IMR-90 (cell line): ENCODE measurements at regions of chr21 and their contacts with region 1.

Region 1: DNA sequence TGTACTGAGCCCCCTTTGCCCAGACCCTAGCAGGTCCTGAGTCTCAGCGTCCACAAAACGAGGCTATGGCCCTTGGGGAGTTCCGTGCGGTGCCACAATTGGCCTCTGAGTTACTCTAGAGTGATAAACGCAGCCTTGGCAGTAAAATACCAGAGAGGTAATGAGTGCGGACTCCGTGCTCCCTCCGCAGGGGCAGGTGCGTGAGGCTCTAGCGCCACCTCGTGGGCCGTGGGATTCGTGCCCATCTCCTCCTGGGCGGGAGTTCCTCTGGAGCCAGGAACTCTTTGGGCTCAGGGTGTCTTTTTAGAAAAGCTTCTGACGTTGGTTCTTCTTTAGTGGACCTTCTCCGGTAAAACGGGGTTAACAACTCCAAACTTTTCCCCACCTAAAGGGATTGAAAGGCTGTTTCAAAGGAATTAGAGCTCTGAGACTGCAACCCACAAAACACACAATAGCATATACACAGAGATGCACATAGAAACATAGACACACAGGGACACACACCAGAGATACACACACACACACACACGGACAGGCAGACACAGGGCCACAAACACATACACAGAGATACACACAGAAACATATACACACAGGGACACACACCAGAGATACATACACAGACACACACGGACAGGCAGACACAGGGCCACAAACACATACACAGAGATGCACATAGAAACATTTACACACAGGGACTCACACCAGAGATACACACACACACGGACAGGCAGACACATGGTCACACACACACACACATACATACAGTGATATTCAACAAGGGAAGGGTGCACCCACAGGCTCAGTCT is 99.4 kb downstream of the KCNJ15 start:
- DNase-seq: peak; percentile 61
- ATAC-seq: peak; percentile 79
- H3K4me3 ChIP-seq: no peak overlapping the region
- H3K27ac ChIP-seq: no peak overlapping the region
- H3K4me1 ChIP-seq: peaks cover 11% of the 10 kb centered on the region
- H3K27me3 ChIP-seq: peaks cover 16% of the 10 kb centered on the region
- CTCF ChIP-seq: peak; percentile 99
- POLR2A ChIP-seq: peak; percentile 55; the same call in 1 of the 2 replicates
- RAD21 ChIP-seq: peak; percentile 100

Region 2: DNA sequence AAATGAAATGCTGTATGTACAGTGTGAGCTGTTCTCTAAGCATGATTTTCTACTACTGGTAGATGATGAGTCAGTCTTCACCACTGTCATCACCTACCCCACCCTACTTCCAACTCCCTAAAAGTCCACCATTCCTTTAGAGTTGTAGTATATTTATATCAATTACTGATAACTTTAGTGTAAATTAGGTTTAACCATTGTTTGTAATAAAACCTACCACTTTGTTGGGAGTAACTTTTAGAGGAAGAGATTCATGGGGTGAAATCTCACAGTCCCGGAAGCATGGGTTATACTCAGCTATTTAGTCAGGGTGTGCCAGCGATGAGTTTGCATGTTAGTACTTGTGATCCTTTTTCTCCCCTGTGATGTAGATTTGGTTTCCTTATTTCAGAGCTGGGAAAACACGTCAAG is 2019.1 kb before region 1 on chr21:
- CTCF ChIA-PET with region 1: no interaction called
- POLR2A ChIA-PET with region 1: no interaction called
- dilution Hi-C with region 1: no loop called
- in situ Hi-C with region 1: no loop called
- intact Hi-C with region 1: no loop called
- DNase-seq: peak; percentile 78
- ATAC-seq: peak; percentile 96
- H3K4me3 ChIP-seq: no peak overlapping the region
- H3K27ac ChIP-seq: no peak overlapping the region
- H3K4me1 ChIP-seq: peaks cover 4% of the 10 kb centered on the region
- H3K27me3 ChIP-seq: no peaks in the 10 kb centered on the region
- CTCF ChIP-seq: no peak
- POLR2A ChIP-seq: no peak
- RAD21 ChIP-seq: no peak

Region 3: DNA sequence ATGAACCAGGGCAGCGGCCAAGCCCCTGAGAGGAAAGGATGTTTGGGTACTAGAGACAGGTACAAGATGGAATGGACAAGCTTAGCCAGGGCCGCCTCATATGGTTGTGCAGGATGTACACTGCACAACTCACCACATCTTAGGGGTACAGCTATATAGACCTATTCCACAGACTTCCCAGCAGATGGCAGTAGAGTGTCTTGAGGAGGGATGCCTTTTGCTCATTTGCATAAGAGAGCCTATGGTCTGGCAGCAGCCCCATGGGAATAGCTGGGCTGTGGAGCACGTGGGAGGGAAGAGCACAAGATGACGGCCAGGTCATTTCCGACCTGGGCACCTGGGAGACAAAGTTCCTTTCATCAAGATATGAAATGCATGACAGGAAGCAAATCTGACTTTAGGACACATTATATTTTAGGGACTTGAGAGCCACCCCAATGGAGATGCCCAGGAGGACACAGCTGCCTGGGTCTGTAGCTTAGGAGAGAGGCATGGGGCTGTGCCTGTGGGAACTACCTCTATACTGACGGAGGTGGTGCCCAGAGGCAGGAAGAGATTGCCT is 655.5 kb before region 1 on chr21:
- CTCF ChIA-PET with region 1: interaction called, 4 read pairs
- POLR2A ChIA-PET with region 1: no interaction called
- dilution Hi-C with region 1: no loop called
- in situ Hi-C with region 1: no loop called
- intact Hi-C with region 1: loop called (anchors 1 kb)
- DNase-seq: peak; percentile 84
- ATAC-seq: peak; percentile 100
- H3K4me3 ChIP-seq: no peak overlapping the region
- H3K27ac ChIP-seq: no peak overlapping the region
- H3K4me1 ChIP-seq: no peaks in the 10 kb centered on the region
- H3K27me3 ChIP-seq: peaks cover 22% of the 10 kb centered on the region
- CTCF ChIP-seq: peak; percentile 78
- POLR2A ChIP-seq: no peak
- RAD21 ChIP-seq: peak; percentile 78

Region 4: GRCh38 chr21:37896788-37897187 is 459.4 kb before region 1 on chr21:
- CTCF ChIA-PET with region 1: no interaction called
- POLR2A ChIA-PET with region 1: no interaction called
- dilution Hi-C with region 1: no loop called
- in situ Hi-C with region 1: no loop called
- intact Hi-C with region 1: no loop called
- DNase-seq: no peak
- ATAC-seq: no peak
- H3K4me3 ChIP-seq: no peak overlapping the region
- H3K27ac ChIP-seq: no peak overlapping the region
- H3K4me1 ChIP-seq: no peaks in the 10 kb centered on the region
- H3K27me3 ChIP-seq: peaks cover 50% of the 10 kb centered on the region
- CTCF ChIP-seq: no peak
- POLR2A ChIP-seq: no peak
- RAD21 ChIP-seq: no peak

Region 5: DNA sequence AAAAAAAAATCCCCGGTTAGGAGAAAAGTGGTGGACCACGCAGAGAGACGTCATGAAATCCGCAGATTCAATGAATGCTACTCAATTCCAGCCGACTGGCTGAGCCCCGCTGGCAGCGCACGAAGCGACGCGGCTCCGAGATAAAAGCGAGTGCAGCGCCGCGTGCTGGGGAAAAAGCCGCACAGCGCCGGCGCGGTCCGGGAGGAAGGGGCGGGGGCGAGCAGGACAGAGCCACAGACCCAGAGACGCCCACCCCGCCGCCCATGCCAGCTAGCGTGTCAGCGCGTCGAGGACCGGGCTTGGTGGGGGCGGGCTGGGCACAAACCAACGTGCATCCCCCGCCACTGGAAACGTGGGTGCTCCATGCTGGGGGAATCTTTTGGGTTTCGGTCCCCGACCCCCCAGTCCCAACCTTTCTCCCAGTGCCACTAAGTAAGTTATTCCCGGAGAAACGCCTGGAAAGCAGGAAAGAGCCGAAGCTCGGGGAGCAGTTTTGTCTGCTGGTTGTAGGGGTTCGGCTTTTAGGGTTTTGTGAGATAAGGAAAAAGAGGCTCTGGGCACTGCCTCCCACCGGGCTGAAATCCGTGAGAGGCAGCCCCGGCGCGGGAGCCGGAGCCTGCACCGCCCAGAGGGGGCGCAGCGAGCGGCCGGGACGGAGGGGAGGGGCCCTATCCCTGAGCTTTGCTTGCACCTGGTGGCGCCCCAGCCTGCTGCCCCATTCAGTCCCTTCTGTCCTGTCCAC is 439.7 kb before region 1 on chr21 and contains the start of gene KCNJ6:
- CTCF ChIA-PET with region 1: no interaction called
- POLR2A ChIA-PET with region 1: no interaction called
- dilution Hi-C with region 1: no loop called
- in situ Hi-C with region 1: no loop called
- intact Hi-C with region 1: loop called (anchors 1 kb)
- DNase-seq: peak; percentile 52
- ATAC-seq: peak; percentile 89
- H3K4me3 ChIP-seq: peak within 1 kb of the TSS; percentile 14
- H3K27ac ChIP-seq: no peak within 1 kb of the TSS; the same call in 1 of the 2 replicates
- H3K4me1 ChIP-seq: peaks cover 6% of the 10 kb centered on the region
- H3K27me3 ChIP-seq: peaks cover 37% of the 10 kb centered on the region
- CTCF ChIP-seq: peak; percentile 91
- POLR2A ChIP-seq: no peak
- RAD21 ChIP-seq: peak; percentile 90
- total RNA-seq, gene KCNJ6: under 0.01 TPM in 2 replicates

Region 6: DNA sequence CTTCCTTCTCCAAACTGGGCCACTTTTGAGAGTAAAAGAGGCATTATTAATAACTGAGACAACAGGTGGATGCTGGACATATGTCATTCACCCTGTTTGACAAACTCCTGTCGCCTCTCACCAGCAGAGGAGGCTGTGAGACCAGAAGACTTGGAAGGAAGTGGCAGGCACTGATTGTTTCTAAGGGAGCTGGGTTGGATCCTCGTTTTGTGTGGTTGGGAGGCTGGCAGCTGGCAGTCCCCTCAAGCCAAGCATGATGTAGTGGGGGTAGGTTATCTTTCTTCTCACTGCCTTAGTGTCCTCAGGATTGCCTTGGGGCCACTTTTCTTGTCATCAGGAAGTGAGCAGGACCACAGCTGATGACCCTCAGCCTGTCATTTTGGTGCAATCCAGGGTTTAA is 185.9 kb before region 1 on chr21:
- CTCF ChIA-PET with region 1: interaction called, 48 read pairs
- POLR2A ChIA-PET with region 1: no interaction called
- dilution Hi-C with region 1: no loop called
- in situ Hi-C with region 1: no loop called
- intact Hi-C with region 1: loop called (anchors 1 kb)
- DNase-seq: peak; percentile 12
- ATAC-seq: no peak
- H3K4me3 ChIP-seq: no peak overlapping the region
- H3K27ac ChIP-seq: no peak overlapping the region; the same call in 1 of the 2 replicates
- H3K4me1 ChIP-seq: peaks cover 15% of the 10 kb centered on the region
- H3K27me3 ChIP-seq: peaks cover 4% of the 10 kb centered on the region; the same call in 1 of the 2 replicates
- CTCF ChIP-seq: peak; percentile 44
- POLR2A ChIP-seq: no peak
- RAD21 ChIP-seq: peak; percentile 62

Region 7: GRCh38 chr21:38236232-38236631 is 120.0 kb before region 1 on chr21:
- CTCF ChIA-PET with region 1: interaction called, 3 read pairs
- POLR2A ChIA-PET with region 1: no interaction called
- dilution Hi-C with region 1: no loop called
- in situ Hi-C with region 1: no loop called
- intact Hi-C with region 1: loop called (anchors 1 kb)
- DNase-seq: no peak
- ATAC-seq: peak; percentile 74
- H3K4me3 ChIP-seq: no peak overlapping the region
- H3K27ac ChIP-seq: no peak overlapping the region
- H3K4me1 ChIP-seq: no peaks in the 10 kb centered on the region
- H3K27me3 ChIP-seq: no peaks in the 10 kb centered on the region
- CTCF ChIP-seq: peak; percentile 36
- POLR2A ChIP-seq: no peak
- RAD21 ChIP-seq: peak; percentile 25; the same call in 1 of the 2 replicates

Region 8: GRCh38 chr21:38787461-38788274 is 431.5 kb after region 1 on chr21:
- CTCF ChIA-PET with region 1: no interaction called
- POLR2A ChIA-PET with region 1: no interaction called
- dilution Hi-C with region 1: no loop called
- in situ Hi-C with region 1: no loop called
- intact Hi-C with region 1: no loop called
- DNase-seq: peak; percentile 76
- ATAC-seq: peak; percentile 37; the same call in 1 of the 2 replicates
- H3K4me3 ChIP-seq: no peak overlapping the region
- H3K27ac ChIP-seq: no peak overlapping the region
- H3K4me1 ChIP-seq: no peaks in the 10 kb centered on the region
- H3K27me3 ChIP-seq: no peaks in the 10 kb centered on the region
- CTCF ChIP-seq: no peak
- POLR2A ChIP-seq: no peak
- RAD21 ChIP-seq: no peak